ENCODE measurements at regions of chr1 and their contacts with region 1.

Region 1: DNA sequence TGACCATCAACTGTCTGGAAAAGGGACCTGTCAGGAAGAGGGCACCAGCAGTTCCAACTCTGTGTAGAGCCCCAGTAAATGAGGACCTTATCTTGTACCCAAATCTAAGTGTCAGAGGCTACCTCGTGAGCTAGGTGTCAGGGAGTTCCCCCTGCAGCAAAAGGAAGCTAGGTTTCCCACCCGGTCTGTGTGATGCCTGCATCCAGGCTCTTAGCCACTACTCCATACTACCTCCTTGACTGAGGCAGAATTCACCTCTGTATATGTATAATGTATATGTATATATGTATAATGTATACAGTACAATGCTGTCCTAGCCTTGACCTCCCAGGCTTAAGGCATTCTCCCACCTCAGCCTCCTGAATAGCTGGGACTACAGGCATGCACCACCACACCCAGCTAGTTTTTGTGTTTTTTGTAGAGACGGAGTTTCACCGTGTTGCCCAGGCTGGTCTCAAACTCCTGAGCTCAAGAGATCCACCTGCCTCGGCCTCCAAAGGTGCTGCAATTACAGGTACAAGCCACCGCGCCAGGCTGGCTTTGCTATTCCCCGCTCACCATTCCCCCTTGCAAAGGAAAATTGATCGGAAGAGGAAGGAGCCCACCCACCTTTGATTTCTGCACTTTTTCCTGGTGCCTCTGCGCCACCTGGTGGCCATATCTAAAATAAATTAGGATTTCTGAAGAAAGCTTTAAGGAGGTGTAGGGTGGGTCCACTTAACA is 15.7 kb upstream of the LUZP1 start:
- DNase-seq: peak; percentile 44 to 64 (median 54)
- H3K4me3 ChIP-seq: peak overlapping the region in 1 of 2 donors; percentile 35
- H3K4me3 Mint-ChIP-seq: peak overlapping the region; percentile 66 to 86 (median 78)
- H3K27ac ChIP-seq: no peak overlapping the region
- H3K27ac Mint-ChIP-seq: peak overlapping the region in 6 of 7 donors; percentile 19 to 81 (median 62)
- H3K4me1 ChIP-seq: peaks cover 11% of the 10 kb centered on the region
- H3K4me1 Mint-ChIP-seq: peaks cover 8 to 18% (median 11%) of the 10 kb centered on the region in 4 donors
- H3K27me3 ChIP-seq: no peaks in the 10 kb centered on the region
- H3K27me3 Mint-ChIP-seq: peaks cover 0 to 1% of the 10 kb centered on the region in 2 donors

Region 2: DNA sequence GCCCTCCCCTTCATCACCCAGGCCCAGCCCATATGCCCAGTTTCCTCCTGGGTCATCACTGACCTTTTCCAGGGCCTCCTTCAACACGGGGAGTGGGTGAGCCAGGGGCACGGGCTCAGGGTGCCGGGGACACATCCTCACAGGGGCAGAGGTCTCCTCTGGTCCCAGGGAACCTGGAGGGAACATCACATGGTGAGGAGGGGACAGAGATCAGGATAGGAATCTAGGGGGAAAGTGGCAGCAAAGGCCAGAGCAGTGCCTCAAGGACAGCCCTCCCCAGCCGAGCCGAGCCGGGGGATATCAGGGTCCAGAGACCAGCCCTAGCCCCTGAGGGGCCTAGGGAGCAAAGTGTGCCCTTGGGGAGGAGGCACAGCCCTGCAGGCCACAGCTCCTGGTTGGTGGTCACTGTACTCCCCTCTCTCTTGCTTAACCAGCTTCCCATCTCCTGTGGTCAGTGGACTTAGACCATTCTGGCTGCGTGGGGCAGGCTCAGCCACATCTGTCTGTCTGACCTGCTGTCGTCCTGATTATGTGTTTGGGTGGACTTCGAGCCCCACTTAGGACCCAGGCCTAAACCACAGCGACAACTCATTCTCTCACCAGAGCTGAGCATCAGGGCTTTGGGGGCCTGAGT is 221.2 kb before region 1 on chr1:
- CTCF ChIA-PET with region 1: interaction called, 13 read pairs
- POLR2A ChIA-PET with region 1: no interaction called
- intact Hi-C with region 1: loop called (anchors 5 kb)
- DNase-seq: no peak
- H3K4me3 ChIP-seq: no peak overlapping the region
- H3K4me3 Mint-ChIP-seq: no peak overlapping the region
- H3K27ac ChIP-seq: no peak overlapping the region
- H3K27ac Mint-ChIP-seq: peak overlapping the region in 1 of 7 donors; percentile 29
- H3K4me1 ChIP-seq: no peaks in the 10 kb centered on the region
- H3K4me1 Mint-ChIP-seq: no peaks in the 10 kb centered on the region
- H3K27me3 ChIP-seq: no peaks in the 10 kb centered on the region
- H3K27me3 Mint-ChIP-seq: peaks cover 9 to 16% of the 10 kb centered on the region in 2 donors

Region 3: GRCh38 chr1:23114424-23115079 is 69.8 kb before region 1 on chr1:
- CTCF ChIA-PET with region 1: interaction called, 74 read pairs
- POLR2A ChIA-PET with region 1: interaction called, 15 read pairs
- intact Hi-C with region 1: no loop called
- DNase-seq: peak in 1 of 5 donors; percentile 12
- H3K4me3 ChIP-seq: no peak overlapping the region
- H3K4me3 Mint-ChIP-seq: peak overlapping the region in 6 of 8 donors; percentile 23 to 66 (median 45)
- H3K27ac ChIP-seq: no peak overlapping the region
- H3K27ac Mint-ChIP-seq: peak overlapping the region; percentile 24 to 87 (median 61)
- H3K4me1 ChIP-seq: peaks cover 93% of the 10 kb centered on the region
- H3K4me1 Mint-ChIP-seq: peaks cover 49 to 91% (median 68%) of the 10 kb centered on the region in 4 donors
- H3K27me3 ChIP-seq: no peaks in the 10 kb centered on the region
- H3K27me3 Mint-ChIP-seq: no peaks in the 10 kb centered on the region

Region 4: GRCh38 chr1:23132033-23132432 is 52.3 kb before region 1 on chr1:
- CTCF ChIA-PET with region 1: interaction called, 16 read pairs
- POLR2A ChIA-PET with region 1: no interaction called
- intact Hi-C with region 1: no loop called
- DNase-seq: no peak
- H3K4me3 ChIP-seq: no peak overlapping the region
- H3K4me3 Mint-ChIP-seq: no peak overlapping the region
- H3K27ac ChIP-seq: no peak overlapping the region
- H3K27ac Mint-ChIP-seq: no peak overlapping the region
- H3K4me1 ChIP-seq: no peaks in the 10 kb centered on the region
- H3K4me1 Mint-ChIP-seq: peaks cover 10 to 23% (median 14%) of the 10 kb centered on the region in 4 donors
- H3K27me3 ChIP-seq: no peaks in the 10 kb centered on the region
- H3K27me3 Mint-ChIP-seq: no peaks in the 10 kb centered on the region

Region 5: GRCh38 chr1:23168457-23169194 is 15.7 kb before region 1 on chr1 and contains the start of gene LUZP1:
- CTCF ChIA-PET with region 1: interaction called, 126 read pairs
- POLR2A ChIA-PET with region 1: interaction called, 7 read pairs
- intact Hi-C with region 1: no loop called
- DNase-seq: peak; percentile 77 to 87 (median 80)
- H3K4me3 ChIP-seq: peak within 1 kb of the TSS; percentile 72 to 76
- H3K4me3 Mint-ChIP-seq: peak within 1 kb of the TSS; percentile 95 to 98 (median 97)
- H3K27ac ChIP-seq: peak within 1 kb of the TSS; percentile 73
- H3K27ac Mint-ChIP-seq: peak within 1 kb of the TSS; percentile 88 to 98 (median 96)
- H3K4me1 ChIP-seq: peaks cover 23% of the 10 kb centered on the region
- H3K4me1 Mint-ChIP-seq: peaks cover 19 to 51% (median 32%) of the 10 kb centered on the region in 4 donors
- H3K27me3 ChIP-seq: no peaks in the 10 kb centered on the region
- H3K27me3 Mint-ChIP-seq: no peaks in the 10 kb centered on the region
- total RNA-seq, gene LUZP1: 24.7 to 27.9 TPM